Activated CD4-positive, alpha-beta memory T cell treated with anti-CD3 and anti-CD28 coated beads for 36 hours (primary cell): ENCODE measurements at regions of chr4 and their contacts with region 1.

Region 1: GRCh38 chr4:75302648-75303047 is 211.6 kb downstream of the RCHY1 start:
- DNase-seq: no peak
- H3K4me3 Mint-ChIP-seq: no peak overlapping the region
- H3K27ac Mint-ChIP-seq: no peak overlapping the region
- H3K4me1 Mint-ChIP-seq: no peaks in the 10 kb centered on the region
- H3K27me3 Mint-ChIP-seq: no peaks in the 10 kb centered on the region

Region 2: DNA sequence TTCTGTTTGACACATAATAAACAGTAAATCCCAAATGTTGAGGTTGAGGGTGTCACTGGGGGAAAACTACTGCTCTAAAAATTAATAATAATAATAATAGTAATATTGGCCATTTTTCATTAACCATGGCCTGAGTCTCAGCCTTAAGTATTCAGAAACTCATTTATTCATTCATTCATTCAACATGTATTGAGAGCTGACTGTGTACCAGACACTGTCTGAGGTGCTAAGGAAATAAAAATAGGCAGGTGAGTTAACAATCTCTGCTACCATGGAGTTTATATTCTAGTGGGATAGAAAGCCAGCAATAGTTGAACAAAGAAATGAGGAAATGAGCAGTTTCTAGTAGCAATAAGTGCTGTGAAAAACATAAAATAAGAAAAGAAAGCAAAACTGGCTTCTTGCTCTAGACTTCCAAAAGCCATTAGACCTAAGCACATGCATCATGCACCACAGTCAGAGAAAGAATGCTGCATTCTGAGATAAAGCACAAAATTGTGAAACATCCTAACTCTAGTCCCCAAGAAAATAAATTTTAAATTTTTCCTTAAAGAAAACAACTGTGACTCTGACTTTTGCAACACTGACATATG is 67.2 kb before region 1 on chr4:
- CTCF ChIA-PET with region 1: no interaction called
- POLR2A ChIA-PET with region 1: no interaction called
- intact Hi-C with region 1: no loop called
- DNase-seq: no peak
- H3K4me3 Mint-ChIP-seq: no peak overlapping the region
- H3K27ac Mint-ChIP-seq: no peak overlapping the region
- H3K4me1 Mint-ChIP-seq: no peaks in the 10 kb centered on the region
- H3K27me3 Mint-ChIP-seq: no peaks in the 10 kb centered on the region

Region 3: GRCh38 chr4:75327804-75328512 is 25.3 kb after region 1 on chr4:
- CTCF ChIA-PET with region 1: no interaction called
- POLR2A ChIA-PET with region 1: no interaction called
- intact Hi-C with region 1: loop called (anchors 2 kb)
- DNase-seq: no peak
- H3K4me3 Mint-ChIP-seq: no peak overlapping the region
- H3K27ac Mint-ChIP-seq: no peak overlapping the region
- H3K4me1 Mint-ChIP-seq: no peaks in the 10 kb centered on the region
- H3K27me3 Mint-ChIP-seq: peaks cover 2% of the 10 kb centered on the region